ENCODE measurements at regions of chr1 and their contacts with region 1.

Region 1: DNA sequence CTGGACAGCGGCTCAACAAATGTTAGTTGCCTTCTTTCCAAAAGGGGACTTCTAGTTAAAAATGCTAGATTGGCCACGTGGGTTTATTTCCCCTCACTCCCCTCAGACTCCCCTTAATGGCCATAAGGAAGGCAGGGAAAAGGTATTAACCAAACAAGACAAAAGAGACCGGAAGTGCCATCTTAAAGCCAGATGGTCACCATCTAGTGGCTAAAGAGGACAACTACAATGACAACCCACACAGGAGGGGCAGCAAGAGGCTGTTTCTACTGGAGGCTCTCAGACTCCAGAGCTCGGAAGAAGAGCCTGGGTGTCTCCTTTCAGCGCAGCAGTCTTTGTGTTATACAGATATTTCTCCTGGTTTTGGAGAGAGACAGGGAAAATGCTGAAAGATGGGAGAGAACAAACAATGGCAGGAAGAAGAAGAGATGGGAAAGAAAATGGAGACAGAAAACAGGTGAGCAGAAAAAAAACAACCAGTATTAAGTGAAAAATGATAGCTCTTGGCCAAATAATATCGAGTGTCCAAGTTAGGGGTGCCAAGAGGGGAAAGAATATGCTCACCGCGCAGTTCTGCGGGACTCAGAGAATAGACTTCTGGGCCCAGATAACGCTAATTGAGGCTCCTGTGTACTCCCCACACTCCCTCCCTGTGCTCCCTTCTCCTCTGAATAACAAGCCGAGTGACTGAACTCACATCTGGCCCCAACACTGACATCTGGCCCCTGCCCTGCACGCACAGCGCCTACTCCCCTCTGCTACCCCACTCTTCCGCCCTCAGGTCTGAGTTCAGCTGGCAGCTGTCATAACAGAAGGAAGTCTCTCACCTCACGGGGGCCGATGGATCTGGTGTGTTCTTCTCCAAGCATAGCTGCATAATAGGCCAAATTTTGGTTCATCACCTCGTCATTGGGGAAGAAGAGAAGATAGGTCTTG is 9.6 kb downstream of the P3H1 start:
- DNase-seq: no peak
- H3K4me3 ChIP-seq: no peak overlapping the region
- H3K27ac ChIP-seq: no peak overlapping the region
- H3K4me1 ChIP-seq: peaks cover 0 to 12% (median 4%) of the 10 kb centered on the region in 4 donors
- H3K27me3 ChIP-seq: no peaks in the 10 kb centered on the region
- CTCF ChIP-seq: peak; percentile 42 to 72 (median 54)
- EP300 ChIP-seq: no peak
- POLR2A ChIP-seq: no peak

Region 2: GRCh38 chr1:42586016-42586415 is 171.2 kb before region 1 on chr1:
- intact Hi-C with region 1: loop called (anchors 5 kb)
- DNase-seq: no peak
- H3K4me3 ChIP-seq: no peak overlapping the region
- H3K27ac ChIP-seq: no peak overlapping the region
- H3K4me1 ChIP-seq: no peaks in the 10 kb centered on the region
- H3K27me3 ChIP-seq: no peaks in the 10 kb centered on the region
- CTCF ChIP-seq: no peak
- EP300 ChIP-seq: no peak
- POLR2A ChIP-seq: no peak

Region 3: GRCh38 chr1:42681741-42682483 is 75.3 kb before region 1 on chr1 and contains the start of gene YBX1:
- intact Hi-C with region 1: loop called (anchors 2 kb)
- DNase-seq: peak; percentile 100
- H3K4me3 ChIP-seq: peak within 1 kb of the TSS; percentile 95 to 98 (median 96)
- H3K27ac ChIP-seq: peak within 1 kb of the TSS; percentile 96 to 99 (median 98)
- H3K4me1 ChIP-seq: peaks cover 50 to 56% (median 53%) of the 10 kb centered on the region in 4 donors
- H3K27me3 ChIP-seq: no peaks in the 10 kb centered on the region
- CTCF ChIP-seq: no peak
- EP300 ChIP-seq: no peak
- POLR2A ChIP-seq: peak; percentile 69
- total RNA-seq, gene YBX1: 778 to 889 (median 812) TPM

Measured in esophagus muscularis mucosa (tissue), 4 donors.